Heart right ventricle (tissue), 16 donors: ENCODE measurements at regions of chr4 and their contacts with region 1.

Region 1: DNA sequence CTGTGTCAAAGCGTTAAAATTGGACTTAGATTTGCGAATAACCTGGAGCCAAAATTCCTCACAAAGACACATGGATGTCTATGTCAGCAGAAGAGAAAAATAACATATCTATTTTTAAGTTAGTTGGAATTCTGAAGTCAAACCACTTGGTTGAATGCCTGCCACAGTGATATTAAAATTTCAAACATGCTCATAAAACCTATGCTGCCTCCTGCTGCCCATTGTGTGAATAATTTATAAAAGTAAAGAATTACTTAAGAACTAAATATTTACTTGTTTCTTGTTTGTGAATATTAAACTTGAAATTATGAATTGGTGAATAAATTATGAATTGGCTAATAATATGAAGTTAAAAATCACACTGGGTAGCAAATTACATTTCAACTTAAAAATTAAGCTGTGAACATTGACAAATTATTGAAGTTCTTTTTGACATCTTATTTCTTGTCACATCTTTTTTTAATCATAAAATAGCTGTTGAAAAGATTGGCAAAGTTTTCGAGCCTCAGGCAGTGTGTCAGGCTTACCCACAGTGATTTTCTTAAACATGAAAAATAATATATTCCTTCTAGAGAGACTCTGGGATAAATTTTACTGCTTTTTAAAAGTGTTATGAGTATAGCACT is 35.4 kb downstream of the FABP2 start:
- DNase-seq: peak in 1 of 2 donors; percentile 53
- ATAC-seq: peak in 7 of 8 donors; percentile 39 to 78 (median 63)
- H3K4me3 ChIP-seq: no peak overlapping the region
- H3K27ac ChIP-seq: peak overlapping the region in 7 of 10 donors; percentile 10 to 75 (median 59)
- H3K4me1 ChIP-seq: peaks cover 0 to 51% (median 33%) of the 10 kb centered on the region in 9 donors
- H3K27me3 ChIP-seq: no peaks in the 10 kb centered on the region
- CTCF ChIP-seq: peak; percentile 30 to 81 (median 71)

Region 2: DNA sequence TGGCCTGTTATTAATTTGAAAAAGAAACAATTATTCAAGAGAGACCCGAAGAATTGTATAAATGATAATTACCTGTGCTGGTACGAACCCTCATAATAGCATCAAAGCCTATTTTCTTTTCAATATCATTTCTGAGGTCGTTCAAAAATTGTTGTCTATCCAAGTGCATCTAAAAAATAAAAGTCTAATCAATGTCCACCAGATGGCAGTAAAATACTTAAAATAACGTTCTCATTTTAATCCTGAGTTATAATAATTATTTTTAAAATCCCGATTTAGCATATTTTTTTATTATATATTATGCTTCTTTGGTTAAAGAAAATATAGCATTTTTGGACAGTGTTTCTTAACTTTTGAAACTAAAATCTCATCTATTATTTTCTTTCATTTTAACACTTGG is 545.6 kb before region 1 on chr4:
- intact Hi-C with region 1: loop called in 4 of 10 experiments (anchors 5 to 10 kb)
- DNase-seq: no peak
- ATAC-seq: peak in 2 of 8 donors; percentile 36 to 57
- H3K4me3 ChIP-seq: peak overlapping the region in 5 of 10 donors; percentile 4 to 20 (median 15)
- H3K27ac ChIP-seq: peak overlapping the region in 9 of 10 donors; percentile 11 to 82 (median 64)
- H3K4me1 ChIP-seq: peaks cover 3 to 32% (median 20%) of the 10 kb centered on the region in 9 donors
- H3K27me3 ChIP-seq: no peaks in the 10 kb centered on the region
- CTCF ChIP-seq: peak; percentile 21 to 70 (median 54)

Region 3: GRCh38 chr4:118981839-118982381 is 304.6 kb before region 1 on chr4:
- intact Hi-C with region 1: loop called in 9 of 10 experiments (anchors 5 to 10 kb)
- DNase-seq: peak in 1 of 2 donors; percentile 79
- ATAC-seq: peak; percentile 54 to 89 (median 80)
- H3K4me3 ChIP-seq: peak overlapping the region in 1 of 10 donors; percentile 4
- H3K27ac ChIP-seq: peak overlapping the region in 5 of 10 donors; percentile 40 to 76 (median 64)
- H3K4me1 ChIP-seq: peaks cover 19 to 75% (median 53%) of the 10 kb centered on the region in 9 donors
- H3K27me3 ChIP-seq: no peaks in the 10 kb centered on the region
- CTCF ChIP-seq: peak; percentile 60 to 88 (median 79)

Region 4: GRCh38 chr4:119103263-119103662 is 183.2 kb before region 1 on chr4:
- intact Hi-C with region 1: loop called in 1 of 10 experiments (anchors 10 kb)
- DNase-seq: no peak
- ATAC-seq: peak; percentile 49 to 90 (median 75)
- H3K4me3 ChIP-seq: no peak overlapping the region
- H3K27ac ChIP-seq: peak overlapping the region in 8 of 10 donors; percentile 24 to 79 (median 56)
- H3K4me1 ChIP-seq: peaks cover 0 to 69% (median 46%) of the 10 kb centered on the region in 9 donors
- H3K27me3 ChIP-seq: no peaks in the 10 kb centered on the region
- CTCF ChIP-seq: no peak

Region 5: DNA sequence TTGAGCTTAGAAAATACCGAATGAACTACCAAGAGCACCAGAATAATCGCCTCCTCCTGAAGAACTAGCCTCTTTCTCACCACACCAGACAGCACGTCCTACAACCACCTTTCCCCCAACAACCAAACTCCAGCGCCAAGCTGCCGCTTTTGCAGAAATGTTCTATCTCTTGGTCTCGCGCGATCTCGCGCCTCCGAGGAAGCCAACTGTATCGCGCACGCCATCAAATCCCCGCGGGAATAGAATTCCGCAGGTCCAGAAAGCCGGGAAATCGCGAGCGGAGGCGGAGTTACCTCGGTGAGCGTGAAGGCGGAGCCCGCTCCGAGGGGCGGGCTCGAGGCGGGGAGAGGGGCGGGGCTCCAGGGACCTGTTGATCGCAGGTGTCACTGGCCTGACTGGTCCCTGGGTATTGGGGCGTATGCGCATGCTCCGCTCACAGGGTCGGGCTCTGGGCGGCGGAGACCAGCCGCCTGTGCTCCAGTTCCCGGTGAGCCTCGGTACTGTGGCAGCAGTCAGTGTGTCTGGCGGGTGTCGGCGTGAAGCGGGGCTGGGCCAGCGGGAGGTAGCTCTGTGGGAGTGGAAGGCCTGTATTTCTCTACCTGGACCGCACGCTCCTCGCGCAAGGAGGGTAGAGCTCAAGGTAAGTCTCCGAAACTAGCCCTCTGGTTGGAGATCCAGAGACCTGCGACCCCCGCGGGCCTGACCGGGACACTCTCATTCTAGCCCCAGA is 74.1 kb before region 1 on chr4 and contains the start of gene USP53:
- intact Hi-C with region 1: loop called in 5 of 10 experiments (anchors 5 to 10 kb)
- DNase-seq: peak; percentile 96 to 97
- ATAC-seq: peak; percentile 96 to 99 (median 98)
- H3K4me3 ChIP-seq: peak within 1 kb of the TSS; percentile 69 to 93 (median 82)
- H3K27ac ChIP-seq: peak within 1 kb of the TSS; percentile 92 to 97 (median 96)
- H3K4me1 ChIP-seq: peaks cover 0 to 44% (median 19%) of the 10 kb centered on the region in 9 donors
- H3K27me3 ChIP-seq: no peaks in the 10 kb centered on the region
- CTCF ChIP-seq: peak in 1 of 9 donors; percentile 5
- total RNA-seq, gene USP53: 26.4 to 64.6 (median 41.8) TPM